CD4-positive, alpha-beta memory T cell (primary cell): ENCODE measurements at regions of chr19 and their contacts with region 1.

Region 1: GRCh38 chr19:58362272-58362994 is at the start of gene ZNF497:
- DNase-seq: peak; percentile 95 to 96 (median 95)
- H3K4me3 ChIP-seq: peak within 1 kb of the TSS; percentile 90 to 98
- H3K4me3 Mint-ChIP-seq: peak within 1 kb of the TSS; percentile 90 to 98 (median 93)
- H3K27ac ChIP-seq: peak within 1 kb of the TSS; percentile 69
- H3K27ac Mint-ChIP-seq: peak within 1 kb of the TSS; percentile 79 to 98 (median 94)
- H3K4me1 ChIP-seq: peaks cover 11% of the 10 kb centered on the region
- H3K4me1 Mint-ChIP-seq: peaks cover 6 to 13% (median 9%) of the 10 kb centered on the region in 4 donors
- H3K27me3 ChIP-seq: no peaks in the 10 kb centered on the region
- H3K27me3 Mint-ChIP-seq: no peaks in the 10 kb centered on the region
- total RNA-seq, gene ZNF497: 1.7 to 2.0 TPM

Region 2: DNA sequence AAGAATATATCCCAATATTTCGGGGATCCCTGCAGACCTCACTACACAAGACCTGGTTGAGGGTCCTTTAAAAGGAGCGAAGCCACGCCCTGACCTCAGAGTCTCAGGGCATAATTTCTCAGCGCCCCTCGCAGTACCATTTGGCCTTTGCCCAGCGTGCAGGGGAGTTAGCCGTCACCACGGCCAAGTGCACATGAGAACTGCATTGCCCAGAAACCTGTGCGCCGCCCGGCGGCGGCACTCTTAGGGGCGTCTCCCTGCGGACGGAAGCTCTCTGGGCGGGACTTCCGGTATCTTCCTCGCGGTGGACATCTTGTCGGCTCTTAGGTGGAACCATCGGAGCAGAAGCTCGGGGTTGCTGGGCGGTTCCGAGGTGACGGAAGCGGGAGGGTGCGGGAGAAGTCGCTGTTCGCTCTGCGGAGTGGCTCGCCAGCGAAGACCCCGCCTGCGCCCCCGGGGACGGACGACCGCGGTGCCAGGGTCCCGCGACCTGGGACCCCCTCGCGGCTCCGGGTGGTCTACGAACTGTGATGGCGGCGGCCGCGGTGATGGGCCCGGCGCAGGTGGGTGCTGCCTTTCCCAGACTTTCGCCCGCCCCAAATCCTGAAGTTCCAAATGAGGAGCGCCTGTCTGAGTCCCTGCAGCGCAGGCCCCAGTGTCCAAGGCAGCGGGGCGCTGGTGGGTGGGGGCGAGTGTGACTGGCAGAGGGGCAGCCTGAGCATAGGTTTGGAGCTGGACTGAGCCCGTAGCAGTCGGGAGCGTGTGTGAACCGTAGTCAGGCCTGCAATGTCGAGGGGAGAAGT is 748.3 kb before region 1 on chr19 and contains the start of gene ZNF134:
- CTCF ChIA-PET with region 1: no interaction called
- POLR2A ChIA-PET with region 1: no interaction called
- intact Hi-C with region 1: no loop called
- DNase-seq: peak; percentile 86 to 88 (median 87)
- H3K4me3 ChIP-seq: peak within 1 kb of the TSS; percentile 78 to 92
- H3K4me3 Mint-ChIP-seq: peak within 1 kb of the TSS; percentile 89 to 94 (median 92)
- H3K27ac ChIP-seq: peak within 1 kb of the TSS; percentile 58
- H3K27ac Mint-ChIP-seq: peak within 1 kb of the TSS; percentile 57 to 90 (median 88)
- H3K4me1 ChIP-seq: peaks cover 18% of the 10 kb centered on the region
- H3K4me1 Mint-ChIP-seq: peaks cover 17 to 42% (median 32%) of the 10 kb centered on the region in 4 donors
- H3K27me3 ChIP-seq: no peaks in the 10 kb centered on the region
- H3K27me3 Mint-ChIP-seq: no peaks in the 10 kb centered on the region
- total RNA-seq, gene ZNF134: 32.1 to 32.3 TPM

Region 3: DNA sequence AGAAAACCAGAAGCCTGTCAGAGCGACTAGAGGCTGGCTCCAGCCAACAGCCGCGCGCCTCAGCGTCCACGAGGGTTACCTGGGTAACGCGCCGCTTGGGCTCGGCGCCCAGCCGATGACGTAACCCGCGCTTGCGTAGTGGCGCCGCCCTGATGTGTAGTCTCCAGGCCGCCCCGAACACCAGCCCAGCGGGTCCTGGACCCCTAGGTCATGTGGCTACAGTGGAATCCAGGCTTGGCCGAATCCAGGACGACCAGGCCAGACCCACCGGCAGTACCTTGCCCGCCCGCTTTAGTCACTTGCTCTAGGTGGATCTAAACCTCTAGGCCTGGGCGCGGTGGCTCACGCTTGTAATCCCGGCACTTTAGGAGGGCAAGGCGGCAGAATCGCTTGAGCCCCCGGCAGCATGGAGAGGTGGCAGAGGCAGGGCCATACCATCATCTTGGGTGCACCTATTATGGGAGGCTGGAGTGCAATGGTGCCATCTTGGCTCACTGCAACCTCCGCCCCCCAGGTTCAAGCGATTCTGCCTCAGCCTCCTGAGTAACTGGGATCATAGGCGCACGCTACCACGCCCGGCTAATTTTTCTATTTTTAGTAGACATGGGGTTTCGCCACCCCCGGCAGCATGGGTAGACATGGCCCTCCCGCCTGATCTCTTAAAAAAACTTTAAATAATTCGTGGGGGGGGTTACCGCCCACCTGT is 352.6 kb before region 1 on chr19:
- CTCF ChIA-PET with region 1: no interaction called
- POLR2A ChIA-PET with region 1: no interaction called
- intact Hi-C with region 1: no loop called
- DNase-seq: peak in 4 of 5 donors; percentile 28 to 60 (median 44)
- H3K4me3 ChIP-seq: peak overlapping the region in 1 of 2 donors; percentile 11
- H3K4me3 Mint-ChIP-seq: peak overlapping the region in 6 of 8 donors; percentile 35 to 78 (median 58)
- H3K27ac ChIP-seq: peak overlapping the region; percentile 26
- H3K27ac Mint-ChIP-seq: peak overlapping the region in 6 of 7 donors; percentile 36 to 77 (median 64)
- H3K4me1 ChIP-seq: no peaks in the 10 kb centered on the region
- H3K4me1 Mint-ChIP-seq: peaks cover 0 to 8% (median 3%) of the 10 kb centered on the region in 4 donors
- H3K27me3 ChIP-seq: no peaks in the 10 kb centered on the region
- H3K27me3 Mint-ChIP-seq: peaks cover 2 to 4% of the 10 kb centered on the region in 2 donors

Region 4: GRCh38 chr19:58278157-58279041 is 84.0 kb before region 1 on chr19 and contains the start of gene ZNF8:
- CTCF ChIA-PET with region 1: no interaction called
- POLR2A ChIA-PET with region 1: interaction called, 10 read pairs
- intact Hi-C with region 1: loop called (anchors 1 kb)
- DNase-seq: peak; percentile 93 to 97 (median 95)
- H3K4me3 ChIP-seq: peak within 1 kb of the TSS; percentile 62 to 92
- H3K4me3 Mint-ChIP-seq: peak within 1 kb of the TSS; percentile 93 to 100 (median 98)
- H3K27ac ChIP-seq: peak within 1 kb of the TSS; percentile 73
- H3K27ac Mint-ChIP-seq: peak within 1 kb of the TSS; percentile 91 to 99 (median 96)
- H3K4me1 ChIP-seq: peaks cover 36% of the 10 kb centered on the region
- H3K4me1 Mint-ChIP-seq: peaks cover 28 to 57% (median 36%) of the 10 kb centered on the region in 4 donors
- H3K27me3 ChIP-seq: no peaks in the 10 kb centered on the region
- H3K27me3 Mint-ChIP-seq: no peaks in the 10 kb centered on the region
- total RNA-seq, gene ZNF8: 9.5 to 10.2 TPM

Region 5: DNA sequence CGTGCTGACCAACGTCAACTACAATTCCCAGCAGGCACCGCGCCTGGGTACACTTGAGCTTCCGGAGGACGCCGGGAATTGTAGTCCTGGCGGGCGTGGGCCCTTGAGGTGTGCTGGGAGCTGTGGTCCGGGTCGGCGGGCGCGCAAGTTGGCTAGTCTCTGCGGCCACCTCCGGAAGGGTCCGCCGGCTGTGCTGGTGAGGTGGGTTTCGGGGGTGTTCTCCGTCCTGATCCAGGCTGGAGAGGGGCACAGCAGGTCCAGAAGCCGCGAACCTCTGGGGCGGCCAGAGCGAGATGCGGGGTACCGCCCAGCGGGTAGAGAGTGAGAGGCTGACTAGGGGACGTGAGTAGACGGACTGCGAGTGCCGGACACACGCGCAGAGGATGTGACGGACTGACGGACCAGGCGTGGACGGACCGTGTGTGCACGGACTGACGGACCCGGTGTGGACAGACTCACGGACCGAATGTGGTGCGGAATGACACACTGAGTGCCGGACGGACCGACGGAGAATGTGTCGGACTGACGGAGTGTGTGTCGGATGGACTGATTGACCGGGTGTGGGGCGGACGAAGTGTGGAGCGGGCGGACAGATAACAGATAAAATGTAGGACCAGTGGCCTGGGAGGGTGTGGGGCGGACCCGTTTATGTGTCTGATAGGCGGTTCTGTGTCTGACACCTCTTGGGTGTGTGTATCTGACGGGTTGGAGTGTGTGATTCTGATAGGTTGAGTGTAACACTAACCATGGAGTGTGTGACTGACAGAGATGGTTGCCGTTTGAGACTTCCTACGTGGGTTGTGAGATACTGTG is 35.3 kb before region 1 on chr19 and contains the start of gene ZSCAN22:
- CTCF ChIA-PET with region 1: no interaction called
- POLR2A ChIA-PET with region 1: interaction called, 13 read pairs
- intact Hi-C with region 1: loop called (anchors 1 kb)
- DNase-seq: peak; percentile 80 to 89 (median 83)
- H3K4me3 ChIP-seq: peak within 1 kb of the TSS; percentile 32 to 77
- H3K4me3 Mint-ChIP-seq: no peak within 1 kb of the TSS
- H3K27ac ChIP-seq: peak within 1 kb of the TSS; percentile 80
- H3K27ac Mint-ChIP-seq: no peak within 1 kb of the TSS
- H3K4me1 ChIP-seq: peaks cover 25% of the 10 kb centered on the region
- H3K4me1 Mint-ChIP-seq: peaks cover 0 to 2% (median under 1%) of the 10 kb centered on the region in 4 donors
- H3K27me3 ChIP-seq: no peaks in the 10 kb centered on the region
- H3K27me3 Mint-ChIP-seq: no peaks in the 10 kb centered on the region
- total RNA-seq, gene ZSCAN22: 5.0 to 5.3 TPM

Region 6: DNA sequence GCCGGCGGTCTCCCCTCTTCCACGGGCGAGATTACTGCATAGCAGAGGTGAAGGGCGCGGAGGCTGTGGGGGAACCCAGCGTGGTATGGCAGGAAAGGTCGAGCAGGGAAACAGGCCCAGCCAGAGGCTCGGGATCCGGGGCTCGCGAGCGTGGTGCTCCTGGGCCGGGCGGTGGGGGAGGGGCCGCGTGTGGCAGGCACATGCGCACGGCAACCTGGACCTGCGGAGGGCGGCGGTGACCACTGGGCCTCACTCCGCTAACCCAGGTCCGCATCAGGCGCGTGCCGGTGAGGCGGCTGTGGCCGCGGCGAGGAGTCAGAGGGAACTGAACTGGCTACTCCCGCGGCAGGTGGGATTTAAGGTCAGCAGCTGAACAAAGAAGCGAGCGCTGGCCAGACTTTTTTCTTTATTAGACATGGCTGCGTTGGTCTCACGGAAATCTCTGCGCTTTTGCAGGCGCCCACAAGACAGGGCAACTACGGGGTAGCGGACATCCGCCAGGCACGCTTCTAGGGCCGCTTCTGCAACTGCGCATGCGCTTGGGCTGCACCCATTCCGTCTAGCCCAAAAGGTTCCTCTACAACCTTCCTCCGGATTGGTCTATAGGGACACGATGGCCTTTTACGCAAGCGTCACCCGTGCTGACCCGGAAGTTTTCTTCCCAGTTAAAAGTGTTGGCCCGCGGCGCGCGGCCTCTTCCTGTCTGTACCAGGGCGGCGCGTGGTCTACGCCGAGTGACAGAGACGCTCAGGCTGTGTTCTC is 24.3 kb after region 1 on chr19 and contains the start of gene RPS5:
- CTCF ChIA-PET with region 1: interaction called, 4 read pairs
- POLR2A ChIA-PET with region 1: interaction called, 44 read pairs
- intact Hi-C with region 1: loop called (anchors 1 kb)
- DNase-seq: peak; percentile 94 to 99 (median 98)
- H3K4me3 ChIP-seq: peak within 1 kb of the TSS; percentile 56 to 65
- H3K4me3 Mint-ChIP-seq: peak within 1 kb of the TSS; percentile 93 to 99 (median 96)
- H3K27ac ChIP-seq: peak within 1 kb of the TSS; percentile 89
- H3K27ac Mint-ChIP-seq: peak within 1 kb of the TSS; percentile 96 to 99 (median 98)
- H3K4me1 ChIP-seq: peaks cover 41% of the 10 kb centered on the region
- H3K4me1 Mint-ChIP-seq: peaks cover 27 to 60% (median 39%) of the 10 kb centered on the region in 4 donors
- H3K27me3 ChIP-seq: no peaks in the 10 kb centered on the region
- H3K27me3 Mint-ChIP-seq: no peaks in the 10 kb centered on the region
- total RNA-seq, gene RPS5: 1,267 to 1,360 TPM

Region 7: GRCh38 chr19:58408152-58409009 is 45.9 kb after region 1 on chr19 and contains the start of gene ZNF584:
- CTCF ChIA-PET with region 1: interaction called, 5 read pairs
- POLR2A ChIA-PET with region 1: interaction called, 12 read pairs
- intact Hi-C with region 1: loop called (anchors 1 kb)
- DNase-seq: peak; percentile 93 to 94 (median 93)
- H3K4me3 ChIP-seq: peak within 1 kb of the TSS; percentile 71 to 94
- H3K4me3 Mint-ChIP-seq: peak within 1 kb of the TSS; percentile 92 to 100 (median 96)
- H3K27ac ChIP-seq: peak within 1 kb of the TSS; percentile 77
- H3K27ac Mint-ChIP-seq: peak within 1 kb of the TSS; percentile 91 to 98 (median 95)
- H3K4me1 ChIP-seq: peaks cover 25% of the 10 kb centered on the region
- H3K4me1 Mint-ChIP-seq: peaks cover 21 to 39% (median 33%) of the 10 kb centered on the region in 4 donors
- H3K27me3 ChIP-seq: no peaks in the 10 kb centered on the region
- H3K27me3 Mint-ChIP-seq: no peaks in the 10 kb centered on the region
- total RNA-seq, gene ZNF584: 10.3 to 10.7 TPM

Region 8: GRCh38 chr19:58460039-58460438 is 97.6 kb after region 1 on chr19:
- CTCF ChIA-PET with region 1: no interaction called
- POLR2A ChIA-PET with region 1: no interaction called
- intact Hi-C with region 1: no loop called
- DNase-seq: no peak
- H3K4me3 ChIP-seq: no peak overlapping the region
- H3K4me3 Mint-ChIP-seq: no peak overlapping the region
- H3K27ac ChIP-seq: no peak overlapping the region
- H3K27ac Mint-ChIP-seq: no peak overlapping the region
- H3K4me1 ChIP-seq: no peaks in the 10 kb centered on the region
- H3K4me1 Mint-ChIP-seq: peaks cover 0 to 7% (median under 1%) of the 10 kb centered on the region in 4 donors
- H3K27me3 ChIP-seq: no peaks in the 10 kb centered on the region
- H3K27me3 Mint-ChIP-seq: peaks cover 0 to 1% of the 10 kb centered on the region in 2 donors

Region 9: GRCh38 chr19:58513694-58514563 is 151.5 kb after region 1 on chr19:
- CTCF ChIA-PET with region 1: interaction called, 11 read pairs
- POLR2A ChIA-PET with region 1: interaction called, 12 read pairs
- intact Hi-C with region 1: no loop called
- DNase-seq: peak; percentile 93 to 95 (median 94)
- H3K4me3 ChIP-seq: peak overlapping the region in 1 of 2 donors; percentile 32
- H3K4me3 Mint-ChIP-seq: peak overlapping the region; percentile 74 to 88 (median 84)
- H3K27ac ChIP-seq: peak overlapping the region; percentile 61
- H3K27ac Mint-ChIP-seq: peak overlapping the region; percentile 82 to 93 (median 91)
- H3K4me1 ChIP-seq: peaks cover 31% of the 10 kb centered on the region
- H3K4me1 Mint-ChIP-seq: peaks cover 11 to 49% (median 29%) of the 10 kb centered on the region in 4 donors
- H3K27me3 ChIP-seq: no peaks in the 10 kb centered on the region
- H3K27me3 Mint-ChIP-seq: no peaks in the 10 kb centered on the region